Activated CD4-positive, alpha-beta T cell treated with anti-CD3 and anti-CD28 coated beads for 36 hours (primary cell): ENCODE measurements at regions of chr9 and their contacts with region 1.

Region 1: DNA sequence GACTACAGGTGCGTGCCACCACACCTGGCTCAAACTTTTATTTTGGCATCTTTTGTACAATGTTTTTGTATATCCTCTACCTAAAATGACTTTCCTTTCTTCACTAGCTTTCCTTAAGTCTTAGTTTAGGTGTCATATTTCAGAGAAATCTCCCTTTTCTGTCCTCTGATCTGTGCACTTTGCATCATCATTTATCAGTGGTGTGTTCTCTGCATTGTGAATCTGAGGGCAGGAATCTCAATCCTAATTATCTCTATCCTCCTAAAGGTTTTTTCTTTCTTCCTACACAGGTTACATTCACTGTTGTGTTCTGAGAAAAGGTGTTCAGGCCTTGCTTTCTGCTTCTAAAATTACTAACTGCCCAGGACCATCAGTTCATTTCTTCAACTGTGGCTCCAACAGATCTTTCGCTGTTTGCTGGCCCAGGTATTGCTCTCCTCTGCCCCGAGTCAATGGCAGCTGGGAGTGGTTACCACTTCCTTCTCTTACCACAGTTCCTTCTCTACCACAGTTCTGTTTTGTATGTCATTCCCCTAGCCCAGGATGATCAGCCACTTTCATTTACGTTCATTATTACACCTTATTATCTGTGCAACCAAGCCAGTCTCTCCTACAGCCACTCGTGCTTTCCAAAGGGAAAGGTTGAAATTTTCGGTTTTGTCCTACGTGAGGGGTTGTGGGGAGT is 14.0 kb downstream of the TGFBR1 start:
- DNase-seq: peak; percentile 71
- ATAC-seq: peak; percentile 97
- H3K4me3 Mint-ChIP-seq: peak overlapping the region; percentile 48
- H3K27ac Mint-ChIP-seq: peak overlapping the region; percentile 90
- H3K4me1 Mint-ChIP-seq: peaks cover 79% of the 10 kb centered on the region
- H3K27me3 Mint-ChIP-seq: no peaks in the 10 kb centered on the region

Region 2: GRCh38 chr9:98807070-98807810 is 311.7 kb before region 1 on chr9 and contains the start of gene GALNT12:
- CTCF ChIA-PET with region 1: no interaction called
- POLR2A ChIA-PET with region 1: no interaction called
- intact Hi-C with region 1: loop called (anchors 5 to 10 kb)
- DNase-seq: peak; percentile 74
- ATAC-seq: peak; percentile 63
- H3K4me3 Mint-ChIP-seq: peak within 1 kb of the TSS; percentile 81
- H3K27ac Mint-ChIP-seq: peak within 1 kb of the TSS; percentile 65
- H3K4me1 Mint-ChIP-seq: peaks cover 35% of the 10 kb centered on the region
- H3K27me3 Mint-ChIP-seq: peaks cover 3% of the 10 kb centered on the region
- total RNA-seq, gene GALNT12: 10.2 to 12.7 TPM

Region 3: GRCh38 chr9:99104459-99105151 is 14.3 kb before region 1 on chr9 and contains the start of gene TGFBR1:
- CTCF ChIA-PET with region 1: interaction called, 6 read pairs
- POLR2A ChIA-PET with region 1: interaction called, 11 read pairs
- intact Hi-C with region 1: loop called in 1 of 2 experiments (anchors 1 kb)
- DNase-seq: peak; percentile 95
- ATAC-seq: peak; percentile 89
- H3K4me3 Mint-ChIP-seq: peak within 1 kb of the TSS; percentile 79
- H3K27ac Mint-ChIP-seq: peak within 1 kb of the TSS; percentile 83
- H3K4me1 Mint-ChIP-seq: peaks cover 49% of the 10 kb centered on the region
- H3K27me3 Mint-ChIP-seq: no peaks in the 10 kb centered on the region
- total RNA-seq, gene TGFBR1: 18.6 to 19.3 TPM

Region 4: DNA sequence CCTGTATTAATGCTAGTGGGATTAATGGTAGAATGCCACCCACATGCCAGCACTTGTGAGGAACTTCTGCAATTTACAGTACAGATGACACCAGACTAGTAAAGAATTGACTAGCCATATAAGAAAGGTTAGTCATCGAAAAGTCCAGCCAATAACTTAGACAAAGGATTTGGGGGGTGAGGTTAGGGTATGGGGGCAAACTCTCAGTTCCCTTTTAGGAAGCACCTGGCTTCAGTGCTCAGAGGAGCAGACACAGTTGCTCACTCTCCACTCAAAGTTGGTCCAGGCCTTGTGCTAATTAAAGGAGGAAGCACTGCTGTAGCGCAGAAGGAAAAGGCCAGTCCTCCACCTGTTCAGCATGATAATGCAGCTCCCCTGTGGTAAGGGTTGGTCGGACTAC is 11.1 kb after region 1 on chr9:
- CTCF ChIA-PET with region 1: interaction called, 6 read pairs
- POLR2A ChIA-PET with region 1: interaction called, 4 read pairs
- intact Hi-C with region 1: loop called in 1 of 2 experiments (anchors 1 kb)
- DNase-seq: no peak
- ATAC-seq: peak; percentile 30
- H3K4me3 Mint-ChIP-seq: no peak overlapping the region
- H3K27ac Mint-ChIP-seq: peak overlapping the region; percentile 29
- H3K4me1 Mint-ChIP-seq: peaks cover 78% of the 10 kb centered on the region
- H3K27me3 Mint-ChIP-seq: no peaks in the 10 kb centered on the region